CD8-positive, alpha-beta memory T cell (primary cell): ENCODE measurements at regions of chr3 and their contacts with region 1.

Region 1: GRCh38 chr3:4493014-4493940 is at the start of gene ITPR1:
- DNase-seq: peak; percentile 95 to 100 (median 97)
- H3K4me3 ChIP-seq: peak within 1 kb of the TSS; percentile 82
- H3K4me3 Mint-ChIP-seq: peak within 1 kb of the TSS; percentile 90 to 98 (median 94)
- H3K27ac ChIP-seq: peak within 1 kb of the TSS; percentile 79
- H3K27ac Mint-ChIP-seq: peak within 1 kb of the TSS; percentile 71 to 99 (median 92)
- H3K4me1 ChIP-seq: peaks cover 26% of the 10 kb centered on the region
- H3K4me1 Mint-ChIP-seq: peaks cover 40 to 60% (median 58%) of the 10 kb centered on the region in 3 donors
- H3K27me3 ChIP-seq: no peaks in the 10 kb centered on the region
- H3K27me3 Mint-ChIP-seq: no peaks in the 10 kb centered on the region
- total RNA-seq, gene ITPR1: 82.6 to 85.8 TPM

Region 2: DNA sequence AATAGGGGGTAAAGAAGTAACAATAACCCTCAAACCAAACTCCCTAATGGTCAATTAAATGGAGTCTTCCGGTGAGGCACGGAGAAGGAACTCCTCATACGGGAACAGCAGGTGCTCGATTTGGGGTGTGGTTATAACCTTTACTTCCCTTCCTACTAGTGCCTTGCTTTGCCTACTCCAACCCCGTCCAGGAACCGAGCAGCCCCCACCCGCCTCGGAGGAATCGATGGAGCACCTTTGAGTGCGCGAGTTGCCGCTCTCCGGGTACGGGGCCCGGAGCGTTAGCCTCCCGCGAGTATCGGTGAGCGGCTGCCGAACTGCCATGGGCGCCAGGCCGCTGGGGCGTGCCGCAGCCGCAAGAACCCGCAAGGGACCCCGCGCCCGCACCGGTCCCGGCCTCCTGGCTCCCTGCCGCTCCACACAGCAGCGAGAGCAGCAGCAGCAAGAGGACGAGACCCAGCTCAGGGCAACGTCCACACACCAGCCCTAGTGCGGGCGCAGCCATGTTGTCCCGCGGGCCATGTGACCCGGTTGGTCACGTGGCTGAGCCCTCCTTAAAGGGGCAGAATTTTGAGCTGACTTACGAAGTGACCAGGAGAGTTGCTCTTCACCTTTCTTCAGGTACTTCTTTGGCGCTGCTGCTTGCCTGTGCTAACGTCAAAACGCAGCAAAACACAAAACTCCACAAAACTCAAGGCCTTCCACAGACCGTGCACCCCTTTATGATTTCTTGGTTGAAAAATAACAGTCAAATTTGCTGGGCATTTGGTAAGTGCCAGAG is 26.3 kb before region 1 on chr3 and contains the start of gene SUMF1:
- CTCF ChIA-PET with region 1: interaction called, 5 read pairs
- POLR2A ChIA-PET with region 1: interaction called, 29 read pairs
- DNase-seq: peak; percentile 64 to 84 (median 69)
- H3K4me3 ChIP-seq: peak within 1 kb of the TSS; percentile 62
- H3K4me3 Mint-ChIP-seq: peak within 1 kb of the TSS; percentile 89 to 94 (median 92)
- H3K27ac ChIP-seq: peak within 1 kb of the TSS; percentile 75
- H3K27ac Mint-ChIP-seq: peak within 1 kb of the TSS; percentile 81 to 96 (median 92)
- H3K4me1 ChIP-seq: peaks cover 11% of the 10 kb centered on the region
- H3K4me1 Mint-ChIP-seq: peaks cover 20 to 26% (median 21%) of the 10 kb centered on the region in 3 donors
- H3K27me3 ChIP-seq: no peaks in the 10 kb centered on the region
- H3K27me3 Mint-ChIP-seq: peaks cover 0 to 2% of the 10 kb centered on the region in 2 donors
- total RNA-seq, gene SUMF1: 12.1 to 13.0 TPM

Region 3: DNA sequence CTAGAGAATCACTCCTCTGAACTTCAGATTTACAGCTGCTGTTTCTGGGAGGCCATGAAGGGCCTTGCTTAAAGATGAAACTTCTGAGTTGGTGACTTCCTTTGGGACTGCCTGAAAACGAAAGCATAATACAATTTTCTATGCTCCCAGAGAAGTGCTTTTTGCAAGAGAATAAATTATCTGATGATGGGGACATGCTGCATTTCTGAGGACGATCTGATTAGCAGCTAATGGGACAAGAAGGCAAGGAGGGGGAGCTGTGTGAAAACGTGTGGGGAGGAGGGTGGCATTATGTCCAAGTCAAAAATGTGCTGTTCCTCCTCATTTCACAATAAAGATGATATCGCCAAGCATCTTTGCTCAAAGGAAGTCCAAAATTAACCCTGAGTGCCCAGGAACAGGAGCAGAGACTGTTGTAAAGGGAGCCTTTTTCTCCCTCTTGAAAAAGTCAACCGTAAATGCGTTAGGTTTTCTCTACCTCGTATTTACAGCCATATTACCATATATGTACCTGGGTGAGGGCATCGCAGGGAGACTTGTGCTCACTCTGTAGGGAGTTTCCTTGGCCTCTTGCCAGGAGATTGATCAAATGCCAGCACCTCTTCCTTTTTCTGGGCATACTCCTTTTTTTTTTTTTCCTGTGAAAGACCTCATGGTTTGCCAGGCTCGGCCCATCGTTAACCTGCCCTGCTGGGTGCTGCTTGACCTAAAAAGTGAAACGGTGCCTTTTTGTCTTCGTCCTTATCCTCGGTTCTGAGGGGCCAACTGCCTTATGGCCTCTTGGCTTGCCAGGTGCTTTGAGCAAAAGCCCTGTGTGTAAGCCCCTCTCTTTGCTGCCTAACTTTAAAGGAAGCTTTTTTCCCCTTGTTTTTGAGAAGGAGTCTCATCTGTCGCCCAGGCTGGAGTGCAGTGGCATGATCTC is 11.3 kb after region 1 on chr3:
- CTCF ChIA-PET with region 1: interaction called, 18 read pairs
- POLR2A ChIA-PET with region 1: interaction called, 30 read pairs
- DNase-seq: peak in 4 of 5 donors; percentile 22 to 59 (median 46)
- H3K4me3 ChIP-seq: peak overlapping the region; percentile 61
- H3K4me3 Mint-ChIP-seq: peak overlapping the region; percentile 75 to 92 (median 79)
- H3K27ac ChIP-seq: peak overlapping the region; percentile 64
- H3K27ac Mint-ChIP-seq: peak overlapping the region; percentile 78 to 98 (median 92)
- H3K4me1 ChIP-seq: peaks cover 44% of the 10 kb centered on the region
- H3K4me1 Mint-ChIP-seq: peaks cover 48 to 63% (median 58%) of the 10 kb centered on the region in 3 donors
- H3K27me3 ChIP-seq: no peaks in the 10 kb centered on the region
- H3K27me3 Mint-ChIP-seq: no peaks in the 10 kb centered on the region

Region 4: GRCh38 chr3:4517643-4518311 is 24.5 kb after region 1 on chr3:
- CTCF ChIA-PET with region 1: interaction called, 21 read pairs
- POLR2A ChIA-PET with region 1: interaction called, 39 read pairs
- DNase-seq: no peak
- H3K4me3 ChIP-seq: no peak overlapping the region
- H3K4me3 Mint-ChIP-seq: peak overlapping the region in 1 of 7 donors; percentile 69
- H3K27ac ChIP-seq: peak overlapping the region; percentile 3
- H3K27ac Mint-ChIP-seq: peak overlapping the region; percentile 62 to 94 (median 90)
- H3K4me1 ChIP-seq: peaks cover 28% of the 10 kb centered on the region
- H3K4me1 Mint-ChIP-seq: peaks cover 30 to 50% (median 44%) of the 10 kb centered on the region in 3 donors
- H3K27me3 ChIP-seq: no peaks in the 10 kb centered on the region
- H3K27me3 Mint-ChIP-seq: no peaks in the 10 kb centered on the region